Heart left ventricle (tissue), 16 donors: ENCODE measurements at regions of chr5 and their contacts with region 1.

Region 1: GRCh38 chr5:119322948-119323537 is 32.8 kb upstream of the TNFAIP8 start:
- DNase-seq: no peak
- ATAC-seq: no peak
- H3K4me3 ChIP-seq: no peak overlapping the region
- H3K27ac ChIP-seq: peak overlapping the region in 6 of 12 donors; percentile 26 to 86 (median 46)
- H3K4me1 ChIP-seq: peaks cover 0 to 93% (median 8%) of the 10 kb centered on the region in 12 donors
- H3K27me3 ChIP-seq: no peaks in the 10 kb centered on the region
- CTCF ChIP-seq: no peak
- POLR2A ChIP-seq: no peak

Region 2: GRCh38 chr5:119229950-119230349 is 93.1 kb before region 1 on chr5:
- intact Hi-C with region 1: no loop called
- DNase-seq: no peak
- ATAC-seq: no peak
- H3K4me3 ChIP-seq: no peak overlapping the region
- H3K27ac ChIP-seq: no peak overlapping the region
- H3K4me1 ChIP-seq: no peaks in the 10 kb centered on the region
- H3K27me3 ChIP-seq: no peaks in the 10 kb centered on the region
- CTCF ChIP-seq: no peak
- POLR2A ChIP-seq: no peak

Region 3: GRCh38 chr5:119274767-119275130 is 48.3 kb before region 1 on chr5:
- intact Hi-C with region 1: loop called in 1 of 10 experiments (anchors 5 kb)
- DNase-seq: no peak
- ATAC-seq: peak in 1 of 4 donors; percentile 32
- H3K4me3 ChIP-seq: no peak overlapping the region
- H3K27ac ChIP-seq: peak overlapping the region in 2 of 12 donors; percentile 12 to 94
- H3K4me1 ChIP-seq: peaks cover 0 to 82% (median 7%) of the 10 kb centered on the region in 12 donors
- H3K27me3 ChIP-seq: no peaks in the 10 kb centered on the region
- CTCF ChIP-seq: no peak
- POLR2A ChIP-seq: no peak

Region 4: GRCh38 chr5:119373449-119373858 is 50.4 kb after region 1 on chr5:
- intact Hi-C with region 1: no loop called
- DNase-seq: no peak
- ATAC-seq: no peak
- H3K4me3 ChIP-seq: no peak overlapping the region
- H3K27ac ChIP-seq: no peak overlapping the region
- H3K4me1 ChIP-seq: peaks cover 0 to 36% (median 0%) of the 10 kb centered on the region in 12 donors
- H3K27me3 ChIP-seq: no peaks in the 10 kb centered on the region
- CTCF ChIP-seq: no peak
- POLR2A ChIP-seq: no peak

Region 5: GRCh38 chr5:119501671-119502182 is 178.7 kb after region 1 on chr5:
- intact Hi-C with region 1: no loop called
- DNase-seq: no peak
- ATAC-seq: no peak
- H3K4me3 ChIP-seq: no peak overlapping the region
- H3K27ac ChIP-seq: no peak overlapping the region
- H3K4me1 ChIP-seq: peaks cover 0 to 7% (median 0%) of the 10 kb centered on the region in 12 donors
- H3K27me3 ChIP-seq: no peaks in the 10 kb centered on the region
- CTCF ChIP-seq: no peak
- POLR2A ChIP-seq: no peak